ENCODE measurements at regions of chrX and their contacts with region 1.

Region 1: GRCh38 chrX:109714340-109714958 is 18.6 kb downstream of the ACSL4 start:
- DNase-seq: no peak
- ATAC-seq: no peak
- H3K4me3 Mint-ChIP-seq: no peak overlapping the region
- H3K27ac Mint-ChIP-seq: no peak overlapping the region
- H3K4me1 Mint-ChIP-seq: peaks cover 16% of the 10 kb centered on the region
- H3K27me3 Mint-ChIP-seq: no peaks in the 10 kb centered on the region
- CTCF ChIP-seq: no peak

Region 2: GRCh38 chrX:109856974-109857373 is 142.5 kb after region 1 on chrX:
- CTCF ChIA-PET with region 1: interaction called, 58 read pairs
- POLR2A ChIA-PET with region 1: no interaction called
- DNase-seq: no peak
- ATAC-seq: no peak
- H3K4me3 Mint-ChIP-seq: no peak overlapping the region
- H3K27ac Mint-ChIP-seq: no peak overlapping the region
- H3K4me1 Mint-ChIP-seq: peaks cover 18% of the 10 kb centered on the region
- H3K27me3 Mint-ChIP-seq: no peaks in the 10 kb centered on the region
- CTCF ChIP-seq: peak; percentile 27; the same call in 1 of the 2 replicates

Measured in WTC11 (cell line).